ENCODE measurements at regions of chr17 and their contacts with region 1.

Region 1: DNA sequence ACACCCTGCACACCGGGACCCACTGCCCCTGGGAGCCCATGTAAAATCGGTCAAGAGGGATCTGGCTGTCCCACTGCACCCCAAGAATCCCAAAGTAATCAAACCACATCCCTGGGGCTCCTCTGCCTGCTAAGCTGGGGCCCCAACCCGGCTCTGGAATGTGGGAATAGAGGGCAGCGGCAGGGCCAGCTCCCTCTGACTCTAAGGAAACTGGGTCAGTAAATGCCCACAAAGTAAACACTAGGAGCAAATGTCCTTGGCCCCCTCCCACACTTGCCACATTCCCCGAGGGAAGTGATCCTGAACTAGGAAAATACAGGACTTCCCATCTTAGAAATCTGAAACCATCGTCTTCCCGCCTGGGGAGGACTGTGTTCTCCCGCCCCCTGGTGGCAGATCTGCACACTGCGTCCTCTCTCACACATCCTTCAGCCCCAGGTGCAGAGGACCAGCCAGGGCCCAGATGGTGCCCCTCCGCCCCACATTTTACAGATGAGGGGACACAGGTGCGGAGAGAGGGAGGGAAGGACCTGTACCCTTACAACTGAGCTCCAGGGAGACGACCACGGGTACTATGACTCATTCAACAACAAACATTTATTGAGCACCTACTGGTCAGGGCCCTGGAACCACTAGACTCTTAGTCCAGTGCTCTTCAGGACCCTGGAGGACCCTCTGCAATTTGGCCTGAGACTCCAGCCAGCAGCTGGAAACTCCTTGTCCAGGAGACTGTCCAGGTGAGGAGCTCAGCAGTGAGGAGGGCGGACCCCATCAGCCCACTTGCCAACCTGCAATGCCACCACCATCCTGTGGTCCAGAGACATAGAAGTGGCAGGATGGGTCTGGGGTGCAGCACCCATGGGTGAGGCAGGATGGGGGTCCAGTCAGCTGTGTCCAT is 10.1 kb downstream of the P3H4 start:
- DNase-seq: peak; percentile 60 to 72
- ATAC-seq: peak; percentile 83 to 95
- H3K4me3 ChIP-seq: peak overlapping the region in 1 of 4 donors; percentile 30
- H3K27ac ChIP-seq: no peak overlapping the region
- H3K4me1 ChIP-seq: peaks cover 5% of the 10 kb centered on the region in 2 donors
- H3K27me3 ChIP-seq: no peaks in the 10 kb centered on the region
- CTCF ChIP-seq: peak; percentile 93 to 98 (median 97)
- POLR2A ChIP-seq: no peak

Region 2: DNA sequence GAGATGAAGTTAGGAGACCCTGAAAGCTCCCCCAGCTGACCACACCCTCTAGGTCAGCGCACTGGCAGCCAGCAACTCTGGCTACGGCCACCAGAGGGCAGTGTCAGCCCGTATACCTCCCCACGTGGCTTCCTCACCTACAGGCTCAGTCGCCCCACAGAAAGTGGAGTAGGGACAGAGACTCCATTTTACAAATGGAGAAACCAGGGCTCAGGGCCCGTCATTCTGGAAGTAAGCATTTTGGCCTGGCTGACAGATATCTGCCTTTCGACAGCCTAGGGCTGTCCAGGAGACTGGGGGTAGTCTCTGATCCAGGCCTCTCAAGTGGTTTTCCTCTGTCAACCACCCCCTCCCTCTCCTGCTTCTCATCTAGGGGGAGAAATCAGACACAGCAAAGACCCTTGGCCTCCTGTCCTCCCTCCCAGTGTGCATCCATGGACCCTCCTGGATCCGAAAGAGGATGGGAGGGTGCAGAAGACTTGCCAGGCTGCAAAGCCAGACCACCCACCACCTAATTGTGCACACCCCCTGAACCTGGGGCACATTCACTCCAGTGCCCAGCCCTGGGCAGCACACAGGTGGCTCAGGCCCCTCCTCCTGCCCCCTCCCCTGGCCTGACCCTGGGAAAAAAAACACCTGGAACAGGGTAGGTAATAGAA is 63.4 kb before region 1 on chr17:
- in situ Hi-C with region 1: loop called (anchors 5 kb)
- intact Hi-C with region 1: loop called (anchors 1 kb)
- DNase-seq: peak; percentile 55 to 71
- ATAC-seq: peak; percentile 73 to 93
- H3K4me3 ChIP-seq: no peak overlapping the region
- H3K27ac ChIP-seq: no peak overlapping the region
- H3K4me1 ChIP-seq: peaks cover 16 to 21% of the 10 kb centered on the region in 2 donors
- H3K27me3 ChIP-seq: peaks cover 43 to 44% (median 44%) of the 10 kb centered on the region in 3 donors
- CTCF ChIP-seq: peak; percentile 96 to 99 (median 98)
- POLR2A ChIP-seq: no peak

Region 3: GRCh38 chr17:41848788-41849187 is 47.2 kb after region 1 on chr17:
- in situ Hi-C with region 1: no loop called
- intact Hi-C with region 1: no loop called
- DNase-seq: no peak
- ATAC-seq: no peak
- H3K4me3 ChIP-seq: no peak overlapping the region
- H3K27ac ChIP-seq: no peak overlapping the region
- H3K4me1 ChIP-seq: peaks cover 13 to 16% of the 10 kb centered on the region in 2 donors
- H3K27me3 ChIP-seq: no peaks in the 10 kb centered on the region
- CTCF ChIP-seq: no peak
- POLR2A ChIP-seq: no peak

Measured in gastrocnemius medialis (tissue), 4 donors.